ENCODE measurements at regions of chr10 and their contacts with region 1.

Region 1: GRCh38 chr10:129466703-129467358 is at the start of gene MGMT:
- DNase-seq: peak; percentile 89 to 95 (median 92)
- H3K4me3 ChIP-seq: peak within 1 kb of the TSS; percentile 50 to 93 (median 82)
- H3K27ac ChIP-seq: peak within 1 kb of the TSS; percentile 21 to 94 (median 85)
- H3K27me3 ChIP-seq: no peaks in the 10 kb centered on the region
- CTCF ChIP-seq: peak in 13 of 56 donors; percentile 10 to 41 (median 22)
- total RNA-seq, gene MGMT: 5.3 to 23.9 (median 15.3) TPM

Region 2: DNA sequence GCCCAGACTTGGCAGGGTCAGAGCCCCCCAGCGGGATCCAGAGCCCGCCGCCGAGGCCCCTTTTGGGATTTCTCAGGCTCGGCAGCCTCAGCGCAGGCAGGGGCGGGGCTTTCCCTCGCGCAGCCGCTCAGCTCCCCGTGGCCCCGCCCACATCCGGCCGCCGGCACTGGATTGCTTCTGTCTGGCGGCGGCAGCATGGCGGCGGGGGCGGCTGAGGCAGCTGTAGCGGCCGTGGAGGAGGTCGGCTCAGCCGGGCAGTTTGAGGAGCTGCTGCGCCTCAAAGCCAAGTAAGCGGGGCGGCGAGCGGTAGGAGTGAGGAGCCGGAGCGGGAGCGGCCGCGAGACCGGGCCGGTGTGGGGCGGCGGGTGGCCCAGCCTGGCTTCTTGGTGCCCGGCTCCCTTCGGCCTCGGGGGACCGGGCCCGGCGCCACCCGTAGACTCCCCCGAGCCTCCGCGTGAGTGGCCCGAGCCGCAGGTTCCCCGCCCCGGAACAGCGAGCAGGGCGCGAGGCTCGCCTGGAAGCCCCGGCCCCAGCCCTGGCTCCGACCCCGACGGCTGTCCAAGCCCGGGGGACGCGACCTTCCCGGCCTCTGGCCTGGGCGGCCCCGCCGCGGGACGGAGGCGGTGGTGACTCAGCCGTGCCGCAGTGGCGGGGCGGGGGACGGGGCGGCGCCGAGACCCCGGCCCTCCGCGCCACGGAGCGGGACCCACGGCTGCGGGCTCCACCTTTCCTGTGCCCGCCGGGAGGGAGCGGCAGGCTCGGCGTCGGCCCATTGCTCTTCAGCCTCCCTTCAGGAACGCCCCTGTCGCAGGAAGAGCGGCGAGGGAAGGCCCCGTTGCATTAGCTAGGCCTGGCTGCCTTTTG is 669.6 kb after region 1 on chr10 and contains the start of gene GLRX3:
- intact Hi-C with region 1: loop called in 1 of 2 experiments (anchors 10 kb)
- DNase-seq: peak; percentile 65 to 92 (median 83)
- H3K4me3 ChIP-seq: peak within 1 kb of the TSS; percentile 66 to 100 (median 95)
- H3K27ac ChIP-seq: peak within 1 kb of the TSS in 51 of 59 donors; percentile 15 to 93 (median 72)
- H3K27me3 ChIP-seq: no peaks in the 10 kb centered on the region
- CTCF ChIP-seq: peak in 40 of 56 donors; percentile 7 to 58 (median 32)
- total RNA-seq, gene GLRX3: 29.9 to 60.2 (median 46.6) TPM